ENCODE measurements at regions of chrX and their contacts with region 1.

Region 1: DNA sequence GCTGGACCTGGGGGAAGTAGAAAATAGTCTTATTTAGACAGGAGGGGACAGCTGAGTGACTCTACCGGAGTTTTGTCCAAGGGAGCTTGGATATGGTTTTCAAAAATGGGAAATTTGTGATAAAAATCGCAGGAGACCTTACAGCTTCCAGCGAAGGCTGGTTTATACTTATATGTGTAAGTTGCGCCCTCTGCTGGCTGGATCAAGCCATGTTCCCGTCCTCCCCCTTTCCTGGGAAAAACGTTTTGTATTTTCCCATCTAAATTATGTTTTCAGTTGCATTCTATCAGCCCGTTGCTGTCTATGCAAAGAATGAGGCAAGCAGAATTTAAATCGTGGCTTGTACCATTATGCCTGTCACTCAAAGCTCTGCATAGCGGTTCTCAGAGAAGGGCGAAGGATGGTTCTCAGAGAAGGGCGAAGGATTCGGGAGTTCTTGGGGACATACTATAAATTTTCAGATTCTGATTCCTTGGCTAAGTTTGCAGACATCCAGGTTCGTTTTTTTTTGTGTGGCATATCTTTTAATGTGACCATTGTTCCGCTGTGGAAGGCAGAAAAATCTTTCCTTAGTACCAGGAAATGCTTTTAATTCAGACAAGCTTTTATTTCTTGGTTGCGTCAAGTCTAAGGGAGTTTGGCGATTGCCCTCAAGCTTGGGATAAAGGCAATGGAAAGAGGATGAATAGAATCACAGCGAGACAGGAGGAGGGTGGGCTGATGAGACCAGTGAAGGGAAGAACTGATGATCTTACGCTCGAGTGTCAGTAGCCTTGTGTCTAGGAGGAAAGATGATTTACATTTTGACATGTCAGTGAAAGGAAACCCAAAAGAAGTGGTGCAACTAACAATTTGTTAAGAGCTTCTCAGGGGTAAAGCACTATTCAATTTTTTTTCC is 128.5 kb upstream of the ARX start:
- DNase-seq: peak; percentile 10
- ATAC-seq: peak; percentile 62; the same call in 2 of the 3 replicates
- H3K4me3 ChIP-seq: no peak overlapping the region
- H3K27ac ChIP-seq: no peak overlapping the region
- H3K4me1 ChIP-seq: no peaks in the 10 kb centered on the region
- H3K27me3 ChIP-seq: no peaks in the 10 kb centered on the region
- CTCF ChIP-seq: peak; percentile 64
- EP300 ChIP-seq: no peak
- POLR2A ChIP-seq: no peak
- RAD21 ChIP-seq: no peak

Region 2: DNA sequence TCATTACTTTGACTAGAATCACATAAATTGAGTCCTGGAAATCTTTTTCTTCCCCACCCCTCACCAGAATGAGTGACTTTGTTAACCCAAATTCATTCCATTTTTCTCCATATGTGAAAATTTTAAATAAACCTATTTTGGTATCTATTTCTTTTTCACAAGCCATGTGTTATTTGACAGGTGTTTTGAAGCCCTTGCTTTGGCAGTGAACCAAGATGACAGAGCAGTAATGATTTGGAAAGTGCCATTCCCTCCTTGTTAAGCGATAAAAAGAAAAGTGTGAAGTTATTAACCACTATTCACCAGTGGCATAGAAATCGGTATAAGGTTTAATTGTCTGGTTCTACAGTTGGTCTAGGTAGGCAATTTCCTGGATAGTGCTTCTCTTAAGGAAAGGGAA is 384.5 kb before region 1 on chrX:
- CTCF ChIA-PET with region 1: no interaction called
- POLR2A ChIA-PET with region 1: no interaction called
- in situ Hi-C with region 1: loop called (anchors 10 kb)
- intact Hi-C with region 1: no loop called
- DNase-seq: no peak
- ATAC-seq: no peak
- H3K4me3 ChIP-seq: no peak overlapping the region
- H3K27ac ChIP-seq: no peak overlapping the region
- H3K4me1 ChIP-seq: 0 out of 2 replicates have a peak, but pooled peaks cover 7% of the 10 kb centered on the region
- H3K27me3 ChIP-seq: no peaks in the 10 kb centered on the region
- CTCF ChIP-seq: no peak
- EP300 ChIP-seq: no peak
- POLR2A ChIP-seq: no peak
- RAD21 ChIP-seq: no peak

Region 3: GRCh38 chrX:24838629-24839028 is 305.7 kb before region 1 on chrX:
- CTCF ChIA-PET with region 1: interaction called, 5 read pairs
- POLR2A ChIA-PET with region 1: no interaction called
- in situ Hi-C with region 1: loop called (anchors 5 kb)
- intact Hi-C with region 1: no loop called
- DNase-seq: no peak
- ATAC-seq: no peak
- H3K4me3 ChIP-seq: no peak overlapping the region
- H3K27ac ChIP-seq: no peak overlapping the region
- H3K4me1 ChIP-seq: no peaks in the 10 kb centered on the region
- H3K27me3 ChIP-seq: no peaks in the 10 kb centered on the region
- CTCF ChIP-seq: peak; percentile 37
- EP300 ChIP-seq: no peak
- POLR2A ChIP-seq: no peak
- RAD21 ChIP-seq: no peak

Region 4: GRCh38 chrX:25020905-25021449 is 123.3 kb before region 1 on chrX:
- CTCF ChIA-PET with region 1: no interaction called
- POLR2A ChIA-PET with region 1: no interaction called
- in situ Hi-C with region 1: no loop called
- intact Hi-C with region 1: loop called (anchors 5 kb)
- DNase-seq: no peak
- ATAC-seq: peak; percentile 90
- H3K4me3 ChIP-seq: peak overlapping the region in 2 of 3 experiments; percentile 44 to 61; a peak in 3 of 6 replicates
- H3K27ac ChIP-seq: no peak overlapping the region
- H3K4me1 ChIP-seq: peaks cover 14% of the 10 kb centered on the region
- H3K27me3 ChIP-seq: peaks cover 2 to 49% of the 10 kb centered on the region in 2 experiments
- CTCF ChIP-seq: peak; percentile 76
- EP300 ChIP-seq: no peak
- POLR2A ChIP-seq: no peak
- RAD21 ChIP-seq: peak; percentile 63

Region 5: GRCh38 chrX:25034889-25035288 is 109.4 kb before region 1 on chrX:
- CTCF ChIA-PET with region 1: interaction called, 3 read pairs
- POLR2A ChIA-PET with region 1: no interaction called
- in situ Hi-C with region 1: loop called (anchors 10 kb)
- intact Hi-C with region 1: no loop called
- DNase-seq: peak; percentile 4
- ATAC-seq: peak; percentile 41; the same call in 2 of the 3 replicates
- H3K4me3 ChIP-seq: no peak overlapping the region
- H3K27ac ChIP-seq: no peak overlapping the region
- H3K4me1 ChIP-seq: no peaks in the 10 kb centered on the region
- H3K27me3 ChIP-seq: no peaks in the 10 kb centered on the region
- CTCF ChIP-seq: peak; percentile 38
- EP300 ChIP-seq: no peak
- POLR2A ChIP-seq: no peak
- RAD21 ChIP-seq: no peak

Measured in HepG2 (cell line).